A549 (cell line): ENCODE measurements at regions of chr17 and their contacts with region 1.

Region 1: DNA sequence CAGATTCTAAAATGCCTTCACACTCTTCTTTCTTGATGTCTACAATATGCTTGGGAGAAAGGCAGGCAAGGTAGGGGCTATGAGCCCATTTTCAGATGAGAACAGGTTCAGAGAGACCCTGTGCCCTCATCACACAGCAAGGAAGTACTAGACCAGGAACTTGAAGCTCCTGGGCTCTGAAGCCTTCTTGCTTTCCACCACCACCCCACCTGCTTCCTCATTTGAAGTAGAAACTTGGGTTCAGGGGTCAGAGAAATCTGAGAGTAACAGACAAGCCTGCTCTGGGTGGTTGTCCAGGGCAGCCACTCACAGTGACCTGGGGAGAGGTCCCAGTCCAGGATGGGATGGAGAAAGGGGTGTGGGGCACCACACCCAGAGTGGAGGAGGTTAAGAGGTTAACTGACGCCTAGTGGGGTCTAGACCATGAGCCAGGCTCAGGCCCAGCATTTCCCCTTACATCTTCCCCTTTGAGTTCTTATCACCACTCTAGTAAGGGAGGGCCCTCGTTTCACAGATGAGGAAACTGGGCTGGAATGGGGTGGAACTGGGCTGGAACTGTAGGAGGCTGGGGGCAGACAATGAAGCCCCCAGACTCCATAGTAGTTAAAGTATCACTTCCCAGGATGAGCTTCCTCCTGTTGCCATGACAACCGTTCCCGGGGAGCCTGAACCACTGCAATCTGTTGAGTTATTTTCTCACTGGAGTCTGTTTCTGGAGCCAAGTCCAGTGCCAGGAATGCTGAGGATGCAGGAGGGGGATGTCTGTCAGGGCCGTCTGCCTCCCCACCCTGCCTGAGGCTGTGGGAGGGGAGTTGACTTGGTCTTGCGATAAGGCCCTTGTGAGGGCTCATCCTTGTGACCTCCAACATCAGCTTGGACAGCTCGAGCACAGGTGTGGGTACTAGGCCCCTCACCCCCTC is 16.2 kb upstream of the PHF12 start:
- DNase-seq: no peak
- ATAC-seq: no peak
- H3K4me3 ChIP-seq: no peak overlapping the region
- H3K27ac ChIP-seq: no peak overlapping the region
- H3K4me1 ChIP-seq: 0 out of 3 replicates have a peak, but pooled peaks cover 6% of the 10 kb centered on the region
- CTCF ChIP-seq: no peak
- EP300 ChIP-seq: no peak
- POLR2A ChIP-seq: no peak
- RAD21 ChIP-seq: no peak

Region 2: GRCh38 chr17:28982131-28982951 is 14.9 kb after region 1 on chr17:
- CTCF ChIA-PET with region 1: interaction called, 31 read pairs
- POLR2A ChIA-PET with region 1: no interaction called
- DNase-seq: no peak
- ATAC-seq: no peak
- H3K4me3 ChIP-seq: no peak overlapping the region
- H3K27ac ChIP-seq: no peak overlapping the region
- H3K4me1 ChIP-seq: no peaks in the 10 kb centered on the region
- CTCF ChIP-seq: no peak
- EP300 ChIP-seq: no peak
- POLR2A ChIP-seq: no peak
- RAD21 ChIP-seq: no peak

Region 3: DNA sequence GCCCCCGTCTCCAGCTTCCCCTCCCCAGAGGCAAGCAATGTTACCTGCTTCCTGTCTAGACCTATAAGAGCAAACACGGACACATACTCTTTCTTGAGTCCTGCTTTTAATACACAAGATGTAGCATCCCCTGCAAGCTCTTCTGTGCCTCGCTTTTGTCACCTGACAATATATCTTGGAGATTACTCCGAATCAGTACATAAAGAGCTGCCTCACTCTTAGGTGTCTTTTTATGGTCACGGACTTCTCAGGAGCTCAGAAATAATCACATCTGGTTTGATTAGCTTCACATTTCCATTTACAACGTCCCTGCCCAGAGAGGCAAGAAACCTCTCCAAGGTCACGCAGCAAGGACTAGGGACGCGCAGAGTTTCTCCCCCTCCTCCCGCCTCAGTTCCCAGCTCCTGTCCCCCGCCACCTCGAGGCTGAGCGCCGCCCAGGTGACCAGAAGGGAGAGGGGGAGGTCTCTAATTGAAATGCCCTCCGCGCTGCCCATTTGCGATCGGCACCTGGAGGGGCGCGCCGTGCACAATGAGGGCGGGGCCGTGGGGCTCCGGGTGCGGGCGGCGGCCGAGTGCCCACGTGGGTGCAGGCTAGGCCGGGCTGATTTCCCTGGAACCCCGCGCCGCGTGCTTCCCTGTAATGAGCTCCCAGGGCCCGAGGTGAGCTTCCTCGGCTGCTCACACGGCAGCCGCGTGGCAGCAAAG is 52.1 kb after region 1 on chr17:
- CTCF ChIA-PET with region 1: interaction called, 15 read pairs
- POLR2A ChIA-PET with region 1: no interaction called
- DNase-seq: no peak
- ATAC-seq: no peak
- H3K4me3 ChIP-seq: no peak overlapping the region
- H3K27ac ChIP-seq: no peak overlapping the region
- H3K4me1 ChIP-seq: no peaks in the 10 kb centered on the region
- CTCF ChIP-seq: no peak
- EP300 ChIP-seq: no peak
- POLR2A ChIP-seq: no peak
- RAD21 ChIP-seq: no peak

Region 4: GRCh38 chr17:29089601-29090044 is 122.1 kb after region 1 on chr17:
- CTCF ChIA-PET with region 1: interaction called, 25 read pairs
- POLR2A ChIA-PET with region 1: no interaction called
- DNase-seq: no peak
- ATAC-seq: peak in 1 of 2 experiments; percentile 8; a peak in 1 of 6 replicates
- H3K4me3 ChIP-seq: no peak overlapping the region
- H3K27ac ChIP-seq: no peak overlapping the region
- H3K4me1 ChIP-seq: no peaks in the 10 kb centered on the region
- CTCF ChIP-seq: no peak
- EP300 ChIP-seq: no peak
- POLR2A ChIP-seq: no peak
- RAD21 ChIP-seq: no peak

Region 5: DNA sequence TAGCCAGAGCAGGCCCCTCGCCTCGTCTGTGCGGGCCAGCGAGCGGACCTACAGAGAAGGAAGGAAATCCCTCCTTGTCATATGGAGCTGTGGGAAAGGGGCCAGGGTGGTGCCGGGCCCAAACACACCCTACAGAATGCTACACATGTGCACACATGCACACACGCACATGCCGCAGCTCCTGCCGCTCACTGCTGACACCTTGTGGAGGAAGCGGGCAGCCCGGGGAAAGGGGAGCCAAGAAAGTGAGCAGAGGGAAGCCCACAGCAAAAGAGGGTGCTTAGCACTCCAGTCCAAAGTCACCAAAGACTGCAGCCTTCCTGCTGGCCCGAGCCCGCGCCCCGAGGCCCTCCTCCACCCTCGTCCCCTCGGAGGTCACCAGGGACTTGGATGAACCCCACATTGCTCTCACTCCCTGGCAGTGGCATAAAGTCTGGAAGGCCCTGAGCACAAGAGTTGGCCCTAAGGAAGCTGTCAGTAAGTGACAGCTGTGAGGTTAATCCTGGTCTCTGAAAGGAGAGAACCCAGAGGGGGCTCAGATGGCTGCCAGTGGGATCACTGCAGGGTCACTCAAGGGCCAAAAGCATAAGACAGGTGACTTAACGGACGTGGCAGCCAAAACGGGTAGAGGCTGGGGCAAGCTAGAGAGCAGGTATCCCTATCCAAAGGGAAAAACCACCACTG is 144.5 kb after region 1 on chr17:
- CTCF ChIA-PET with region 1: interaction called, 1,025 read pairs
- POLR2A ChIA-PET with region 1: interaction called, 14 read pairs
- DNase-seq: peak; percentile 65 to 73
- ATAC-seq: peak; percentile 70 to 83
- H3K4me3 ChIP-seq: no peak overlapping the region
- H3K27ac ChIP-seq: no peak overlapping the region
- H3K4me1 ChIP-seq: peaks cover 17% of the 10 kb centered on the region
- CTCF ChIP-seq: peak; percentile 89
- EP300 ChIP-seq: no peak
- POLR2A ChIP-seq: no peak
- RAD21 ChIP-seq: peak; percentile 78 to 83

Region 6: DNA sequence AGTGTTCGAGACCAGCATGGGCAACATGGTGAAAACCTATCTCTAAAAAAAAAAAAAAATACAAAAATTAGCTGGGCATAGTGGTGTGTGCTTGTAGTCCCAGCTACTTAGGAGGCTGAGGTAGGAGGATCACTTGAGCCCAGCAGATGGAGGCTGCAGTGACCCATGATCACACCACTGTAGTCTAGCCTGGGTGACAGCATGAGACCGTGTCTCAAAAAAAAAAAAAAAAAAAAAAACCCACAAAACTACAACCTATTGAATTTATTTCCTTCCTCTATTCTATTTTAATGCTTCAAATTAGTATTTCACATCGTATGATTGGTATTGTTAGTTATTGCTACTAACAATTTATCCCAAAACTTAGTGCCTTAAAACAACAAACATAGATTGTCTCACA is 335.9 kb after region 1 on chr17:
- CTCF ChIA-PET with region 1: no interaction called
- POLR2A ChIA-PET with region 1: no interaction called
- DNase-seq: no peak
- ATAC-seq: no peak
- H3K4me3 ChIP-seq: no peak overlapping the region
- H3K27ac ChIP-seq: no peak overlapping the region
- H3K4me1 ChIP-seq: no peaks in the 10 kb centered on the region
- CTCF ChIP-seq: no peak
- EP300 ChIP-seq: no peak
- POLR2A ChIP-seq: no peak
- RAD21 ChIP-seq: no peak